ENCODE measurements at regions of chr12 and their contacts with region 1.

Region 1: GRCh38 chr12:53451661-53452158 is at the start of gene PCBP2:
- DNase-seq: peak; percentile 97
- H3K4me3 Mint-ChIP-seq: peak within 1 kb of the TSS; percentile 97
- H3K27ac Mint-ChIP-seq: peak within 1 kb of the TSS; percentile 99
- H3K4me1 Mint-ChIP-seq: peaks cover 29% of the 10 kb centered on the region
- H3K27me3 Mint-ChIP-seq: no peaks in the 10 kb centered on the region
- total RNA-seq, gene PCBP2: 865 and 896 TPM in 2 replicates

Region 2: DNA sequence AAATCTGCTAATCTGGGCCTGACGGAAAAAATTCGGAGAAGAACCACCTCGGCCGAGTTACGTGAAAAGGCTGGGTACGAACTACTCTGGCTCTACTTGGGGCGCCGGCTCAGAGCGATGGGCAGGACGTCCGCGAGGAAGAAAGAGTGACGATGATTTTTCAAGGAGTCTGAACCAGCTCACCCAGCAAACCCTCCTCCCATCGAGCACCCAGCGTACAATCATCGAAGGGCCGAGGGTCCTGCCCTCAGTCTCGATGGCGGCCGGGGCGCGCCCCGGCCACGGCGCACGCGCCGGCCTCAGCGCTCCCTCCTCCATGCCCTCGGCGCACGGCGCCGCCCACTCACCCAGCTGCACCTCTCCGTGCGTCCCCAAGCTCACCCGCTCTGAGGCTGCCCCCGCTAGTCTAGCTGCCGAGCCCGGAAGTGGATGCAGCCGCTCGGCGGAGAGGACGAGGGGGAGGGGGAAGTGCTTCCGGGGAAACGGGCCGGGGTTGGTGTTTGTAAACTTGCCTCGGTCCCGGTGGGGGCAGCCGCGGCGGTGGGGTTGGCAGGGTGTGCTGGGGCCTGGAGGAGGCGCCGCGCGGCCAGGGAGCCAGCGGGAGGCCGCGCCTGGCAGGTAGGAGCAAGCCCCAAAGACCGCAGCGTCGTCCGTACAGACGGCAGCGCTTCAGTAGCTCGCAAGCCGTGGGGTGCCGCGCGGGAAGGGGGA is 271.3 kb before region 1 on chr12 and contains the starts of genes CSAD and ZNF740:
- intact Hi-C with region 1: loop called (anchors 1 kb)
- DNase-seq: peak; percentile 97
- H3K4me3 Mint-ChIP-seq: peak within 1 kb of the TSS; percentile 88
- H3K27ac Mint-ChIP-seq: peak within 1 kb of the TSS; percentile 99
- H3K4me1 Mint-ChIP-seq: peaks cover 52% of the 10 kb centered on the region
- H3K27me3 Mint-ChIP-seq: no peaks in the 10 kb centered on the region
- total RNA-seq, gene CSAD: 21.7 and 22.6 TPM in 2 replicates
- total RNA-seq, gene ZNF740: 48.1 and 52.8 TPM in 2 replicates

Region 3: DNA sequence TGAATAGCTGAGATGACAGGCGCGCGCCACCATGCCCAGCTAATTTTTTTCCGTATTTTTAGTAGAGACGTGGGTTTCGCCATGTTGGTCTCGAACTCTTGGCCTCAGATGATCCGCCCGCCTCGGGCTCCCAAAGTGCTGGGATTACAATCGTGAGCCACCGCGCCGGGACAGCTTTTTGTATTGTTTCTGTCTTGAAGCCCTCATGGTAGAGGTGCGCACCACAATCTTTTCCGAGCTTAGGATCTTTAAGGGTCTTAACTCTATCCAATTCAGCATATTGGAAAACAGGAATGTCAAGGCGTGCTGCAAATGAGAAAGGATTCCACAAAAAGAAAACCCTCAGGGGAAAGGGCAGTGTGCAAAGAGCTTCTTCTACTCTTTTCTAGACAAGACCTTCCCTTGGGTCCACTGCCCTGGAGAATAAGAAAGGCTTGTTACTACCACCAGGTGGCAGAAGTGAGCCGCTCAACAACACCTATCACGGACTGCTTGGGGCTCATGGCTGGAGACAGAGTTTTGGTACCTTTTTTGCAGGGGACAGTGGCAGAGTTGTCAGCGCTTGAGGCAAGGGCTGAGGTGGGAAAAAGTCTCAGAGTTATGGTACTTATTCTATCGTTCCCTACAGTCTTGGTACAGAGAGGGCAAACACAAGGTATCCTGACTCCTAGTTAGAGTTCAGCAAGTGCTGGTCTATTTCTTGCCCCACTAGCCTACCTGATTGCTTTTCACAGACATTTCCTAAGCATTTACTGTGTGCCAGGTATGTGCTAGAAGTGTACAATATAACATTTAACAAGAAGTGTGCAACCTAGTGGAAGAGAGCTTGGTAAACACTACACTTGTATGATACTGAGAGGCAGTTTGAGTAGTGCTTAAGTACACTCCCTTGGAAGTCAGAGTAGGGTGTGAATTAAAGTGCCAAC is 99.1 kb before region 1 on chr12:
- intact Hi-C with region 1: loop called (anchors 1 kb)
- DNase-seq: peak; percentile 78
- H3K4me3 Mint-ChIP-seq: no peak overlapping the region
- H3K27ac Mint-ChIP-seq: peak overlapping the region; percentile 47
- H3K4me1 Mint-ChIP-seq: peaks cover 10% of the 10 kb centered on the region
- H3K27me3 Mint-ChIP-seq: no peaks in the 10 kb centered on the region

Region 4: GRCh38 chr12:53476769-53477209 is 25.1 kb after region 1 on chr12:
- intact Hi-C with region 1: loop called (anchors 2 kb)
- DNase-seq: no peak
- H3K4me3 Mint-ChIP-seq: no peak overlapping the region
- H3K27ac Mint-ChIP-seq: peak overlapping the region; percentile 42
- H3K4me1 Mint-ChIP-seq: peaks cover 23% of the 10 kb centered on the region
- H3K27me3 Mint-ChIP-seq: no peaks in the 10 kb centered on the region

Region 5: DNA sequence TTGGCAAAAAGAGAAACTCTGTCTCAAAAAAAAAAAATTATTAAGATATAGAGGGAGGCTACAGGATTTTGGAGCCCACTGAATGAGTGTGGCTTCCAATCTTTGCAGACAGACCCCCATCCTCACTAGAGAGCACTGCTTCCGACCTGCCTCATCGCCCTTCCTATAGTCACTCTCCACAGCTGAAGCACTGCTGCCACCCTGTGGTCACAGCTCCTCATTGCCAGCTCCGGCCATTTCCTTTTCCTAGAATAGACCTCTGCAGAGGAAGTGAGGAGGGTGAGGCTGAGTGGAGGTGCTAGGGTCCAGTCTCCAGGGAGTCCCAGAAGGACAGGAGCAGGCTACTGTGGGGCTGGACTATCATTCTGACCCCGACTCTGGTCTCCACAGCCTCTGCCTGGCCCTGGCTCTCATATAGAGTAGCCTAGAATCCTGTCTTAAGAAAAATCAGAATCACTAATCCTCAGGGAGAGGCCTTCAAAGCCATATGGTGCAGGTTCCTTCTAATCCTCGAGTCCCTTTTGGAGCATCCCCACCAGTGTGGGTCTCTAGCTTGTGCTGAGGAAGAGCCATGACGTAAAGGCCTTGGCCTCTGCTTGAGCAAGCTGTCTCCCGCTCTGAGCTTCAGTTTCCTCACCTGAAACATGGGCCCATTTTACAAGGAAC is 57.0 kb after region 1 on chr12:
- intact Hi-C with region 1: loop called (anchors 1 kb)
- DNase-seq: peak; percentile 79
- H3K4me3 Mint-ChIP-seq: no peak overlapping the region
- H3K27ac Mint-ChIP-seq: peak overlapping the region; percentile 25
- H3K4me1 Mint-ChIP-seq: peaks cover 20% of the 10 kb centered on the region
- H3K27me3 Mint-ChIP-seq: no peaks in the 10 kb centered on the region